Caco-2 (cell line): ENCODE measurements at regions of chr2 and their contacts with region 1.

Region 1: DNA sequence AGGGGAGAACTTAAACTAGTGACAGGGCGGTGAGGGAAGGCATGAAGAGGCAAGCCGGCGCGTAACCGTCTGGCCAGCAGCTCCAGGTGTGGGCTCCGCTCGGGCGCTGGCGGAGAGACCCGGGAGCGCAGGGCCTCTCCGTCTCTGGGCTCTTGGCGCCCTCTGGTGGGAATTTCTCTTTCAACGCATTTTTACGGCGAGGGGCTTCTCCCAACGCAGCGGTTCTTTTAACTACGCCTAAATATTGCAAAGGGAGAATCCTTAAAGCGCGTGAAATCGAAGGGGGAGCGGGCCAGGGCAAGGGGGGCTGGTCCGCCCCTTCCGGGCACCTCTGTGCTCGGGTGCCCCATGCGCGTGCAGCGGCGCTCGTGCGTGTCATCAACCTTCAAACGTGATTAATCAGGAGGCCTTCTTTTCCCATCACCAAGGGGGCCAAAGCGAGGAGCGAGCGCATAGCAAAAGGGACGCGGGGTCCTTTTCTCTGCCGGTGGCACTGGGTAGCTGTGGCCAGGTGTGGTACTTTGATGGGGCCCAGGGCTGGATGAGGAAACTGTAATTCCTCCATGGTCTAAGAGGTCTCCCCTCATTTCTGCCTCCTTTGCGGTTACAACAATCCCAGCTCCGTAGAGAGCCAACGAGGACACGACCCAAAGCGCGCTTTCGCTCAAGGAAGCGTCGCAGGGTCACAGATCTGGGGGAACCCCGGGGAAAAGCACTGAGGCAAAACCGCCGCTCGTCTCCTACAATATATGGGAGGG is 762 bp upstream of the GAD1 start:
- DNase-seq: peak; percentile 81 to 89
- H3K4me3 ChIP-seq: peak overlapping the region; percentile 76
- H3K4me3 Mint-ChIP-seq: peak overlapping the region; percentile 95
- H3K27ac Mint-ChIP-seq: no peak overlapping the region
- H3K4me1 ChIP-seq: peaks cover 7% of the 10 kb centered on the region; the same call in 1 of the 2 replicates
- H3K4me1 Mint-ChIP-seq: peaks cover 7% of the 10 kb centered on the region
- H3K27me3 ChIP-seq: no peaks in the 10 kb centered on the region
- H3K27me3 Mint-ChIP-seq: peaks cover 8% of the 10 kb centered on the region
- CTCF ChIP-seq: peak; percentile 90 to 93

Region 2: GRCh38 chr2:170324640-170325046 is 491.3 kb before region 1 on chr2:
- CTCF ChIA-PET with region 1: interaction called, 8 read pairs
- POLR2A ChIA-PET with region 1: no interaction called
- intact Hi-C with region 1: loop called (anchors 1 kb)
- DNase-seq: peak; percentile 50 to 63
- H3K4me3 ChIP-seq: no peak overlapping the region
- H3K4me3 Mint-ChIP-seq: no peak overlapping the region
- H3K27ac Mint-ChIP-seq: no peak overlapping the region
- H3K4me1 ChIP-seq: peaks cover 7% of the 10 kb centered on the region; the same call in 1 of the 2 replicates
- H3K4me1 Mint-ChIP-seq: no peaks in the 10 kb centered on the region
- H3K27me3 ChIP-seq: no peaks in the 10 kb centered on the region; the same call in 1 of the 2 replicates
- H3K27me3 Mint-ChIP-seq: no peaks in the 10 kb centered on the region
- CTCF ChIP-seq: peak; percentile 78 to 87

Region 3: GRCh38 chr2:170396799-170397459 is 419.0 kb before region 1 on chr2:
- CTCF ChIA-PET with region 1: interaction called, 5 read pairs
- POLR2A ChIA-PET with region 1: no interaction called
- intact Hi-C with region 1: loop called (anchors 1 kb)
- DNase-seq: peak in 1 of 2 experiments; percentile 15
- H3K4me3 ChIP-seq: no peak overlapping the region
- H3K4me3 Mint-ChIP-seq: no peak overlapping the region
- H3K27ac Mint-ChIP-seq: no peak overlapping the region
- H3K4me1 ChIP-seq: peaks cover 12% of the 10 kb centered on the region; the same call in 1 of the 2 replicates
- H3K4me1 Mint-ChIP-seq: peaks cover 8% of the 10 kb centered on the region
- H3K27me3 ChIP-seq: no peaks in the 10 kb centered on the region
- H3K27me3 Mint-ChIP-seq: no peaks in the 10 kb centered on the region
- CTCF ChIP-seq: peak; percentile 5 to 60

Region 4: DNA sequence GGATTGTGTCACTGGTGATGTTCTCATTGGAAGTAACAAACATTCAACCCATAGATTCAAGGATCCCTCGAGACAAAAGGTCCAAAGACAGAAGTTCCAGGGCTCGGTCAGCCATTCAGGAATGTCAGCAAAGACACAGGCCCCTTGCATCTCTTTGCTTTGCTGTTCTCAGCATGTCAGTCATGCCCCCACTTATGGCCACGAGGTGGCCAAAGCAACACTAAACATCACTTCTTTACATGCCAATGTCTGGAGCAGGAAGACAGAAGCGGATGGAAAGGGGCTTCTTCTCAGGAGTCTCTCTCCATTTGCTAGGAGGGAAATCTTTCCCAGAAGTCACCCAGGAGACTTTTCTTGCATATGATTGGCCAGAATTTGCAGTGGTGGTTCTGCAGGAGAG is 292.4 kb before region 1 on chr2:
- CTCF ChIA-PET with region 1: interaction called, 3 read pairs
- POLR2A ChIA-PET with region 1: no interaction called
- intact Hi-C with region 1: loop called (anchors 1 kb)
- DNase-seq: peak in 1 of 2 experiments; percentile 21
- H3K4me3 ChIP-seq: no peak overlapping the region
- H3K4me3 Mint-ChIP-seq: no peak overlapping the region
- H3K27ac Mint-ChIP-seq: no peak overlapping the region
- H3K4me1 ChIP-seq: peaks cover 16% of the 10 kb centered on the region
- H3K4me1 Mint-ChIP-seq: peaks cover 6% of the 10 kb centered on the region
- H3K27me3 ChIP-seq: no peaks in the 10 kb centered on the region
- H3K27me3 Mint-ChIP-seq: no peaks in the 10 kb centered on the region
- CTCF ChIP-seq: peak; percentile 12 to 27

Region 5: GRCh38 chr2:170739048-170739447 is 76.9 kb before region 1 on chr2:
- CTCF ChIA-PET with region 1: no interaction called
- POLR2A ChIA-PET with region 1: no interaction called
- intact Hi-C with region 1: loop called (anchors 1 kb)
- DNase-seq: peak; percentile 39 to 55
- H3K4me3 ChIP-seq: no peak overlapping the region
- H3K4me3 Mint-ChIP-seq: no peak overlapping the region
- H3K27ac Mint-ChIP-seq: peak overlapping the region; percentile 90
- H3K4me1 ChIP-seq: peaks cover 17% of the 10 kb centered on the region
- H3K4me1 Mint-ChIP-seq: peaks cover 14% of the 10 kb centered on the region
- H3K27me3 ChIP-seq: no peaks in the 10 kb centered on the region
- H3K27me3 Mint-ChIP-seq: no peaks in the 10 kb centered on the region
- CTCF ChIP-seq: no peak

Region 6: GRCh38 chr2:171095014-171095582 is 279.2 kb after region 1 on chr2:
- CTCF ChIA-PET with region 1: no interaction called
- POLR2A ChIA-PET with region 1: no interaction called
- intact Hi-C with region 1: no loop called
- DNase-seq: no peak
- H3K4me3 ChIP-seq: no peak overlapping the region
- H3K4me3 Mint-ChIP-seq: no peak overlapping the region
- H3K27ac Mint-ChIP-seq: no peak overlapping the region
- H3K4me1 ChIP-seq: no peaks in the 10 kb centered on the region
- H3K4me1 Mint-ChIP-seq: peaks cover 13% of the 10 kb centered on the region
- H3K27me3 ChIP-seq: no peaks in the 10 kb centered on the region
- H3K27me3 Mint-ChIP-seq: no peaks in the 10 kb centered on the region
- CTCF ChIP-seq: no peak